ENCODE measurements at regions of chr1 and their contacts with region 1.

Region 1: DNA sequence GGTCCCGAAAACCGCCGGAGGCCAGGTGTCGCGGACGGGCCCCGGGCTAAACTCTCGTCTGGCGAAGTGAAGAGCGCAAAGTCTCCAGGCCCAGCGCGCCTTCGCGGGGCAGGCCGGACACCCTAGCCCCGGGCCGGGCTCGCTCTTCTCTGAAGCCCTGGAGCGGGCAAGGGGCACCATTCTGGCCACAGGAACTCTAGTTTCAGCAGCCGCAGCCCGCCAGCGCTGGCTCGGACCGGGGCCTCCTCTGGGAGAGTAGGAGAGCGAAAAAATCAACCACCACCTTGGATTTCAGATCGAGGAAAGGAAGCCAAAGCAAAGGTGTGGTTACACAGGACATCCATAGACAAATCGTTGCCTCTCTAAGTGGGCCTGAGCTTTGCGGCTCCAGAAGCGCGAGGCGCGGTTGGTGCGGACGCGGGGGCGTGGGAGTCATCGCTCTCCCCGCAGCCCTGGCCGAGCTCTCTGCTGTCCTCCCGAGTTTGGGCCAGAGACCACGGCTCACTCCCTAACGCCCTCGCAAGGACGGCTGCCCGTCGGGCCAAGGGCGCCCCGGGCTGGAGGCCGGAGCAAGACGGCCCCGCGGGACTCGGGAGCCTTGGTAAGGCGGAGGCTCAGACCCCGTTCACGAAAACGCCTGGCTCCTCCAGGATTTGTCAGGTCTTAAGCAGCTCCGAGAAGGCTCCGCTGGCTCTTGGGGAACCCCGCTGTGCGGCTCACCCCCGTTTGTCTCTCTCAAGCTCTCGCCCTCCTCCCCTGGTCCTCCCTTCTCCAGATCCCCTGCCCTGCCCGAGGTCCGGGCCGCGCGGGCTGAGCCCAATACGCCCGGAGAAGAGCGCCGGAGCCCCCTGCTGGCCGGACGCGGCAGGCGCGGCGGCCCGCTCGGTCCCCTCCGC is 132.9 kb upstream of the DPYD start:
- DNase-seq: no peak
- H3K4me3 ChIP-seq: peak overlapping the region; percentile 54 to 64 (median 56)
- H3K27ac ChIP-seq: no peak overlapping the region
- H3K4me1 ChIP-seq: peaks cover 10 to 22% (median 17%) of the 10 kb centered on the region in 4 donors
- H3K27me3 ChIP-seq: peaks cover 4 to 78% (median 19%) of the 10 kb centered on the region in 4 donors
- CTCF ChIP-seq: peak; percentile 70 to 98 (median 91)
- EP300 ChIP-seq: no peak
- POLR2A ChIP-seq: no peak

Region 2: DNA sequence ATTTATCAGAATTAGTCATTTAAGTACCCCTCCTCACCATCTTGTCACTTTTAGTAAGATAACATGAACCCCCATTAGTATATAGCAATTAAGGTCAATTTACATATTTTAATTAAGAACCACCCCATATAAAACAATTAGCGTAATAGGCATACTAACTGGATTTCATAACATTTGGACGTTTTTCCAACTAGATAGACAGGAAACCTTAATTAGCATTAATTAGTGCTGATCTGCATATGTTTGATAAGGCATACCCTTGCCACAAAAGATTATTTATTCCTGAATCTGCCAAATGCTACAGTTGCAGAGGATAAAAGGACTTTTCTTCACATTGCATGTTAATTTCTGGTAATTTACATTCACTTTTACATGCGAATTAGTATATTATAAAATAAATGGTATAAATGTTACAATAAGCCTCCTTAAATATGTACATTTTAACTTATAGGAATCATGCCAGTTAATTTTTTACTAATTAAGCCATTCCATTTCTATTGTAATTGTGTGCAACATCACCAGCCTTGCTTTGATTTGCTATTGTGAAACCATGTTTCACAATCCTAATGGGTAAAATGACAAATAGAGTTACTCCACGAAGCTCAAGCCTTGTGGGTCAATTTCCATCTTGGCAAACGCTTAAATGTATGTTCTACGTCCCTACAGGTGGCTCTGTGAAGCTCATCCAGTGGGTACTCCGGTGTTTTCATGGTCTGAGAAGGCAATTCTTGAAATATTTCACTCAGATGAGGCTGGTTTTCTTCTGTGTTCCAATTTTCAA is 602.5 kb before region 1 on chr1:
- intact Hi-C with region 1: loop called (anchors 5 kb)
- DNase-seq: no peak
- H3K4me3 ChIP-seq: no peak overlapping the region
- H3K27ac ChIP-seq: no peak overlapping the region
- H3K4me1 ChIP-seq: no peaks in the 10 kb centered on the region
- H3K27me3 ChIP-seq: no peaks in the 10 kb centered on the region
- CTCF ChIP-seq: no peak
- EP300 ChIP-seq: no peak
- POLR2A ChIP-seq: no peak